ENCODE measurements at regions of chr9 and their contacts with region 1.

Region 1: DNA sequence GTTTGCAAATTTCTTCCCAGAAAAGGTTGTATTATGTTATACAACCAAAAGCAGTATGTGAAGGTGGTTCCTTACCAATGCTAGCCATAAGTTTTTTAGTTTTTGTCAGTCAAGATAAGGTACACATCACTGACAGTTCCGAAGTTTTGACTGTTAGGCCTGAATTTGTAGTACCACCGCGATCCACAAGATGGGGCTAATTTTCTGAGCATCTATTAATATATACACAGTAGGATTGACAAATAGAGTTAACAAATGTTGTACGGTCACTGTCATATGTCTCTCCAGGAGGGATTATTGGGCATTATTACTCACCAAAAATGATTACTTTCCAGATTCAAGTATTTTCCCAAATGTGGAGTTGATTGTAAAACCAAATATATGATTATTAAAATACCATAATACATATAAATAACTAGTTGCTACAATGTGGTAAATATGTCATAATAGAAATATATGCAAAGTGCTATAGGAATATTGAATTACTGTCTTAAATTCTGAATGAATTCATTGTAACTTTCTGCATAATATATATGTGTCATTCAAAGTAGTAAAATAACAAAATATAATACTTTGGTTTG is 28.4 kb upstream of the LRRC19 start:
- DNase-seq: peak in 6 of 10 donors; percentile 31 to 76 (median 55)
- H3K4me3 ChIP-seq: no peak overlapping the region
- H3K27ac ChIP-seq: no peak overlapping the region
- H3K27me3 ChIP-seq: no peaks in the 10 kb centered on the region
- CTCF ChIP-seq: peak; percentile 69 to 88 (median 81)

Region 2: DNA sequence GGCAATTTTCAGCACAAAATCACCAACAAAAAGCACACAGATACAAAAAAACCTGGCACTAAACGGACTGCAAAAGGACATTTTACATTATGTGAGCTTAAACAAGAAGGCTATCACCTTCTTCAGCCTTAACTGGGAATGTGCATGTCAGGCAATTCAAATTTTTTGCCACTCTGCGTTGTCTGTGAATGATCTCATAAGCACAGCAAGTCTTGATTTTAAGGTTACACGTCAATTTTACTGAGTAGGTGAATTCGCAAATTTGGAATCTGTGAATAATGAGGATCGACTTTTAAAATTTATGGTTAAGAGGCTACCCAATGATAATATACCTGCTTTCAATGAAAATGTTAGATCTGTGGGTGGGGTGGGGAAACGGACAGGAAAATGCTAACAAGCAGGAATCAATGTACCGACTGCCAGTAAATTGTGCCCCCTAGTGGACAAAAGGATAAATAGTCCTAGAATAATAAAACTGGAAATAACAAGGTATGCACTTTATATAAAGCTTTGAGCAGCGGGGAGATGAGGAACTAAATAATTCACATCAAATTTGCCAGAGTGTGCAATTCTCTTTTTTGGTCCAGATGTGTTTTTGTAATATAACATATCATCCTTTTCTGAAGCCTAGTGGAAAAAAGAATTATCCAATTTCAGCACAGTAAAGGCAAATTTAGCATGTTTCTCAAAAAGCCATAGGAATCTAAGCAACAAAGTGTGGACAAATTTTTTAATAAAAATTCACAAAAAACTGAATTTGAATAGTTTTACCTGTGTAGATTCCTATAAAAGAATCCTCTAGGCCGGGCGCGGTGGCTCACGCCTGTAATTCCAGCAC is 242.5 kb after region 1 on chr9:
- intact Hi-C with region 1: loop called (anchors 5 to 10 kb)
- DNase-seq: no peak
- H3K4me3 ChIP-seq: peak overlapping the region in 55 of 59 donors; percentile 7 to 61 (median 38)
- H3K27ac ChIP-seq: peak overlapping the region in 2 of 59 donors; percentile 1 to 10
- H3K27me3 ChIP-seq: no peaks in the 10 kb centered on the region
- CTCF ChIP-seq: peak; percentile 68 to 99 (median 84)

Region 3: DNA sequence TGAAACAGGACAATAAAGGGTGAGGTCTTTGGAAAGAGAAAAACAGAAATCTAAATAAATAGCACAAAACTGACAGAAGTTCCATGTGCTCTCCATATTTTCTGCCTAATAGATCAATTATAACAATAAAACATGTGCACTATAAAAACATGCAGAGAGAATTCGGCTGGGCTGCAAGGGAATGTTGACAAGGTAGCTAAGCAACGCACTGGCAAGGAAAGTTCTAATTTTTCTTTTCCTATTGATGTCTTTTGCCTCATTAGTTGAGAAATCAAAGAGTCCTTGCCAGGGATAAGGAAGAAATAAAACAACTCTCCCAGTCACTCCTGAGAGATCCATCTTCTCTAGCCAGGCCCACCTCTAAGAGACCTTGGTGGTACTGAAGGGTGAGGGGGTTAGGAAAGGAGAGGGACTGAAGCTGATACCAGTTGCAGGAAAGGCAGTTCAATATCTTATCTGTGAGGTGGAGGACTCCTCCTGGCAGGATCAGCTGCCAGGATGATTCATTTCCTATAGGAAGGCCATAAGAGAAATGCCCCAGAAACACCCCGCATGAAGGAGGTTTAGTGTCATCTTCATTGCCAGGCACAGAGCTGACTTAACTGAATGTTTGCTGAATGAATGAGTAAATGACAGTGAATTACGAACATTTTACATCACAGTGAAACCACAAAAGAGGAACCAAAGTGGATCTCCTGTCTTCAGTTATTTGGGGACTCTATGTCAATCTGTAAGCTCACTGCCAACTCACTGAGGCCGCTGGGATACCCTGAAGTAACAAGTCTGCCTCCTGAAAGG is 426.5 kb after region 1 on chr9:
- intact Hi-C with region 1: no loop called
- DNase-seq: no peak
- H3K4me3 ChIP-seq: no peak overlapping the region
- H3K27ac ChIP-seq: peak overlapping the region in 21 of 59 donors; percentile 1 to 60 (median 33)
- H3K27me3 ChIP-seq: no peaks in the 10 kb centered on the region
- CTCF ChIP-seq: no peak

Measured in dorsolateral prefrontal cortex (tissue), 120 donors.